GM10248 (cell line): ENCODE measurements at regions of chr7 and their contacts with region 1.

Region 1: GRCh38 chr7:91787931-91788330 is 92.6 kb downstream of the MTERF1 start:
- DNase-seq: no peak
- CTCF ChIP-seq: no peak

Region 2: GRCh38 chr7:91759215-91759871 is 28.6 kb before region 1 on chr7:
- CTCF ChIA-PET with region 1: no interaction called
- POLR2A ChIA-PET with region 1: no interaction called
- DNase-seq: no peak
- CTCF ChIP-seq: no peak

Region 3: GRCh38 chr7:91776171-91776570 is 11.8 kb before region 1 on chr7:
- CTCF ChIA-PET with region 1: interaction called, 12 read pairs
- POLR2A ChIA-PET with region 1: no interaction called
- DNase-seq: no peak
- CTCF ChIP-seq: no peak

Region 4: GRCh38 chr7:91800389-91800788 is 12.5 kb after region 1 on chr7:
- CTCF ChIA-PET with region 1: no interaction called
- POLR2A ChIA-PET with region 1: no interaction called
- DNase-seq: no peak
- CTCF ChIP-seq: no peak